G401 (cell line): ENCODE measurements at regions of chr20 and their contacts with region 1.

Region 1: GRCh38 chr20:63290677-63291472 is 2.1 kb upstream of the COL20A1 start:
- DNase-seq: peak; percentile 17

Region 2: DNA sequence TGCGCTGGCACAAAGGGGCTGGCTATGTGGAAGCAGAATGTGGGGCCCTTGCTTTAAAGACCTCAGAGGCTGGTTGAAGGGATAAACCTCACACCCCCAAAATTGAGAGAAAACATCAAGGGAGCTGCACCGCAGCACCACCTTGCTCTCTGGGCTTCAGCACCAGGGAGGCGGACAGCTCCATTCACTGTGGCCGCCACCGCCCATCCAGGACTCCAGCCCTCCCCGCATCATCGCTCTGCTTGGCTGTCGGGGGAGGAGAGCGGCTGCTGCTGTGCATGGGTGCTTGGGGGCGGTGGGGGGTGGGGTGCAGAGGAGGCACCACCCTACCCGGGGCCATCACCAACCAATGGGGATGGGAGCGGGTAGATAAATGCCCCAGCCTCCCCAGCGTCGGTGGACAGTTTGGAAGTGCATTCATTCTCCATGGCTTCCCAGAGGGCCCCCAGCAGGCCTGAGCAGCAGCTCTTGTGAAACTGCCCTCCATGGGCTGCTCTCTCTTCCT is 208.5 kb before region 1 on chr20:
- in situ Hi-C with region 1: loop called (anchors 25 kb)
- DNase-seq: no peak

Region 3: GRCh38 chr20:63223221-63224207 is 67.4 kb before region 1 on chr20:
- in situ Hi-C with region 1: loop called (anchors 5 kb)
- DNase-seq: peak; percentile 48

Region 4: DNA sequence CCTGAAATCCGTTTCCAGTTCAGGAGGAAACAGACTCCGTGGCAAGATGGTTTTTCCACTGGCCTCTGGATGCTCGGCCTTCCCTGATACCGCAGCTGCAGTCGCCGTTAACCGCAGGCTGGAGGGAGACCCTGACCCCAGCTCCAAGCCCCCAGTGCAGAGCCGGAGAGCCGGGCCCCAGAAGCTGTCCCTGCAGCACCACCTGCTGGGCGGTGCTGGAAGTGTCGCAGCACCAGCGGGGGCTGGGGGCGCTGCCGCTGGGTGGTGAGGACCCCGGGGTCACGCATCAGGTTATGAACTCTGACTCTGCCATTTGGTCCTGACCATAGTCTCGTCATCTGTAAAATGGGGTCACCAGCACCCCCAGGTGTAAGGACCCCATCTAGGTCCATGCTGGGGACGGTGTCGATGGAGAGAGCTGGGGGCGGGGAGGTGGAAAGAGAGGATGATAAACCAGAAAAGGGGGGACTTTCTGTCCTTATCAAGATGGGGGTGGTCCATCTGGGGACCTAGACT is 91.0 kb after region 1 on chr20:
- in situ Hi-C with region 1: loop called (anchors 25 kb)
- DNase-seq: peak; percentile 40